ENCODE measurements at regions of chr15 and their contacts with region 1.

Region 1: GRCh38 chr15:38389924-38390542 is 63.9 kb upstream of the FAM98B start:
- DNase-seq: peak in 1 of 2 experiments; percentile 89
- H3K4me3 ChIP-seq: no peak overlapping the region
- H3K27ac ChIP-seq: no peak overlapping the region
- H3K4me1 ChIP-seq: no peaks in the 10 kb centered on the region
- H3K27me3 ChIP-seq: no peaks in the 10 kb centered on the region
- CTCF ChIP-seq: peak; percentile 40 to 90 (median 76)
- EP300 ChIP-seq: no peak
- POLR2A ChIP-seq: no peak
- RAD21 ChIP-seq: peak; percentile 77 to 84

Region 2: DNA sequence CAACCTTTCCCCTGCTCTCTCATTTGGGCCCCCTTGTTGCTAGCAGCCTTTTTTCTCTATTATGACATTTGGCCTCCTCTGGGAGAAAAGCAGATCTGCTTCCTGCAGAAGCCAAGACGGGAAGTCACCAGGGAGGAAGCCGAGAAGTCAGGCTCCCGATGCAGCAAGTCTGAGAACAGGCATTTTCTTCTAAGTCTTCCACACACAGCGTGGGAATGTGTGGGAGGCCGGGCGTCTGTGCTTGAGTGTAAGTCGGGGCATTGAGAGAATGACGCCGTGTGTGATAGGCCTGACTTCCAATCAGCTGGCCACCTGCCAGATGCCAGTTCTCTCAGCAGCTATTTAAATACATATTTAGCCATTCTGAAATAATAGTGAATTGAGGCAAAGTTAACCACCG is 11.9 kb before region 1 on chr15:
- CTCF ChIA-PET with region 1: interaction called, 20 read pairs
- POLR2A ChIA-PET with region 1: no interaction called
- DNase-seq: no peak
- H3K4me3 ChIP-seq: no peak overlapping the region
- H3K27ac ChIP-seq: no peak overlapping the region
- H3K4me1 ChIP-seq: no peaks in the 10 kb centered on the region
- H3K27me3 ChIP-seq: no peaks in the 10 kb centered on the region
- CTCF ChIP-seq: no peak
- EP300 ChIP-seq: no peak
- POLR2A ChIP-seq: no peak
- RAD21 ChIP-seq: no peak

Measured in H1 (cell line).